ENCODE measurements at regions of chr2 and their contacts with region 1.

Region 1: GRCh38 chr2:196268538-196269338 is 97.4 kb upstream of the STK17B start:
- DNase-seq: no peak
- ATAC-seq: peak; percentile 61
- H3K4me3 ChIP-seq: no peak overlapping the region
- H3K27ac ChIP-seq: peak overlapping the region; percentile 40
- H3K4me1 ChIP-seq: peaks cover 18% of the 10 kb centered on the region
- H3K27me3 ChIP-seq: no peaks in the 10 kb centered on the region
- CTCF ChIP-seq: no peak
- EP300 ChIP-seq: no peak
- POLR2A ChIP-seq: no peak
- RAD21 ChIP-seq: no peak

Region 2: GRCh38 chr2:196160101-196160500 is 108.6 kb before region 1 on chr2:
- CTCF ChIA-PET with region 1: interaction called, 4 read pairs
- POLR2A ChIA-PET with region 1: interaction called, 4 read pairs
- RAD21 ChIA-PET with region 1: interaction called, 95 read pairs
- SMC1A ChIA-PET with region 1: interaction called, 42 read pairs
- in situ Hi-C with region 1: loop called (anchors 25 kb)
- intact Hi-C with region 1: no loop called
- DNase-seq: peak; percentile 86
- ATAC-seq: peak; percentile 64
- H3K4me3 ChIP-seq: no peak overlapping the region; the same call in 1 of the 2 replicates
- H3K27ac ChIP-seq: peak overlapping the region; percentile 77
- H3K4me1 ChIP-seq: peaks cover 29% of the 10 kb centered on the region
- H3K27me3 ChIP-seq: no peaks in the 10 kb centered on the region
- CTCF ChIP-seq: no peak
- EP300 ChIP-seq: peak; percentile 93
- POLR2A ChIP-seq: no peak
- RAD21 ChIP-seq: peak; percentile 17; the same call in 1 of the 2 replicates

Region 3: GRCh38 chr2:196239622-196240587 is 28.8 kb before region 1 on chr2:
- CTCF ChIA-PET with region 1: interaction called, 45 read pairs
- POLR2A ChIA-PET with region 1: interaction called, 6 read pairs
- RAD21 ChIA-PET with region 1: interaction called, 102 read pairs
- SMC1A ChIA-PET with region 1: interaction called, 84 read pairs
- in situ Hi-C with region 1: no loop called
- intact Hi-C with region 1: loop called (anchors 2 kb)
- DNase-seq: peak; percentile 86
- ATAC-seq: peak; percentile 79
- H3K4me3 ChIP-seq: no peak overlapping the region
- H3K27ac ChIP-seq: peak overlapping the region; percentile 75
- H3K4me1 ChIP-seq: peaks cover 36% of the 10 kb centered on the region
- H3K27me3 ChIP-seq: no peaks in the 10 kb centered on the region
- CTCF ChIP-seq: 0 out of 6 replicates have a peak, but pooled peaks of 1 of the 3 experiments have one; percentile 3
- EP300 ChIP-seq: peak; percentile 74 to 85
- POLR2A ChIP-seq: no peak
- RAD21 ChIP-seq: 0 out of 2 replicates have a peak, but pooled peaks have one; percentile 19

Region 4: DNA sequence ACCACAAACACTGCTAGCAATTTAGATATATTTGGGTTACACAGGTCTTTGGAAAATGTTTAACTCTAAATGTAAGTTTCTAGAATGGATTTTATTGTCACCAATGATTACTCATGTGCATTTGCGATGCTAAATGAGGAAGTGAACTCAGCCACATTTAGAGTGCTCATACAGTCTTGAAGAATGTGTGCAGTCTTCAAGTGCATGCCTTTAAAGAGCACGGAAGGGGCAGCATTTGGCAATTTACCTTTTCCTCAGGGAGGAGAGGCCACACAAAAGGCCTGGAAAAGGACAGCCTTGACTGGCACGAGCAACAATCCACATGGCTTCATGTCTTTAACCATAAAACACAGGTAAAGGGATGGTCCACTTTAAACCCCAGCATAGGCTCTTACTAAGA is 18.9 kb before region 1 on chr2:
- CTCF ChIA-PET with region 1: interaction called, 7 read pairs
- POLR2A ChIA-PET with region 1: interaction called, 3 read pairs
- RAD21 ChIA-PET with region 1: interaction called, 102 read pairs
- SMC1A ChIA-PET with region 1: interaction called, 62 read pairs
- in situ Hi-C with region 1: no loop called
- intact Hi-C with region 1: no loop called
- DNase-seq: no peak
- ATAC-seq: peak; percentile 92
- H3K4me3 ChIP-seq: no peak overlapping the region
- H3K27ac ChIP-seq: no peak overlapping the region
- H3K4me1 ChIP-seq: peaks cover 4% of the 10 kb centered on the region
- H3K27me3 ChIP-seq: no peaks in the 10 kb centered on the region
- CTCF ChIP-seq: no peak
- EP300 ChIP-seq: no peak; a peak in 1 of 4 replicates
- POLR2A ChIP-seq: no peak
- RAD21 ChIP-seq: peak; percentile 10; the same call in 1 of the 2 replicates

Region 5: DNA sequence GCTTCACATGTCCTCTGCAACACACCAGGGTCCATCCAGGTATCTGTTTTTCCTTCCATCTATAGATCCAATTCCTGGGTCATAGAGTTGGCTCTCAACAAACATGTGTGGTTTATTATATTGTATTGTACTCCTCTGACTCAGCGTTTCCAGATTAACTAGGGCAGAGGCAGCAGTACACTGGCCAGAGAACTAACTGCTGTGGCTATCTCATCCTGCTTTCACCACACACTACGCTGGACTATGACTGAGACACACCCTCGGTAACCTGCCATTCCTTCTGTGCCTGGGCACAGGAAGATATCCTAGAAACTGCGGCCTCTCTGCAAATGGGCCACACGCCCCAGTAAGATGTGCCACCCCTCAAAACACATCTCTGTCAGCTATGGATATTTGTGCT is 62.4 kb after region 1 on chr2:
- CTCF ChIA-PET with region 1: no interaction called
- POLR2A ChIA-PET with region 1: no interaction called
- RAD21 ChIA-PET with region 1: no interaction called
- SMC1A ChIA-PET with region 1: no interaction called
- in situ Hi-C with region 1: no loop called
- intact Hi-C with region 1: no loop called
- DNase-seq: no peak
- ATAC-seq: no peak
- H3K4me3 ChIP-seq: no peak overlapping the region
- H3K27ac ChIP-seq: no peak overlapping the region
- H3K4me1 ChIP-seq: no peaks in the 10 kb centered on the region
- H3K27me3 ChIP-seq: no peaks in the 10 kb centered on the region
- CTCF ChIP-seq: no peak
- EP300 ChIP-seq: no peak
- POLR2A ChIP-seq: no peak
- RAD21 ChIP-seq: no peak

Measured in GM12878 (cell line).